ENCODE measurements at regions of chr12 and their contacts with region 1.

Region 1: GRCh38 chr12:104740668-104741067 is 217.4 kb downstream of the SLC41A2 start:
- DNase-seq: no peak

Region 2: GRCh38 chr12:104680066-104680465 is 60.6 kb before region 1 on chr12:
- intact Hi-C with region 1: loop called (anchors 5 kb)
- DNase-seq: no peak